A549 (cell line): ENCODE measurements at regions of chr7 and their contacts with region 1.

Region 1: DNA sequence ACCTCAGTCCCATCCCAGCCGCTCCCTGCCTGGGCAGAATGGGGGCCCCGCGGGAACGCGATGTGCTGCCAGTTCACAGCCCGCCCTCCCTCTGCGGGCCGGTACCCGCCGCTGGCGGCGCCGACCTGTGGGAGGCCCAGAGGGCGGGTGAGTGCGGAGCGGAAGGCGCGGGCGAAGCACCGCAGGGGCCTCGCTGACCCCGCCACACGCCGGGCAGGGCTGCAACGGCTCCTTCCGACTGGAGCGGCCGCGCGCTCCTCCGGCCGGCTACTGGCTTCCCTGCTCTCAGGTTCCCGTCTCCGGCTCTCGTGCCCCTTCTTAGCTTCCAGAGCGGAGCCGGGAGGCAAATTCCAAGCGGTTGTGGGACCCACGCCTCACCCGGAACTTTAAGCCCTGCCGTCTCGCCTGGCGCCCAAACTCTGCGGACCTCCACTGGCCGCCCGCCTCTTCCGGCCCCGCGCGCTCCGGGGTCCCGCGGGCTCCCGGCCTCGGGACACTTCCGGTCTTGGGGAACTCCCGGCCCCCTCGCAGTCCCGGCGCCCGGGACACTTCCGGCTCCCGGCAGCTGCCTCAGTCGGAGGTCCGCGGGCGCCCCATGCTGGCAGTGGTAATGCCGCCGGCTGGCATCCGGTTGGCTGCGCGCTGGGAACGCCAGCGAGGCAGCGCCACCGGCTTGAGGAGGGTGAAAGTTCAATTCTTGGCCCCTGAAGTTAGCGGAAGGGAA is at the start of gene CYREN:
- DNase-seq: peak; percentile 93 to 97
- ATAC-seq: peak; percentile 93 to 95
- H3K4me3 ChIP-seq: peak within 1 kb of the TSS; percentile 87
- H3K27ac ChIP-seq: peak within 1 kb of the TSS; percentile 96 to 99
- H3K4me1 ChIP-seq: peaks cover 25% of the 10 kb centered on the region
- CTCF ChIP-seq: peak; percentile 84
- EP300 ChIP-seq: no peak; a peak in 1 of 5 replicates
- POLR2A ChIP-seq: peak; percentile 46
- RAD21 ChIP-seq: peak; percentile 67 to 84
- polyA plus RNA-seq, gene CYREN: 69.1 and 70.4 TPM in 2 replicates

Region 2: DNA sequence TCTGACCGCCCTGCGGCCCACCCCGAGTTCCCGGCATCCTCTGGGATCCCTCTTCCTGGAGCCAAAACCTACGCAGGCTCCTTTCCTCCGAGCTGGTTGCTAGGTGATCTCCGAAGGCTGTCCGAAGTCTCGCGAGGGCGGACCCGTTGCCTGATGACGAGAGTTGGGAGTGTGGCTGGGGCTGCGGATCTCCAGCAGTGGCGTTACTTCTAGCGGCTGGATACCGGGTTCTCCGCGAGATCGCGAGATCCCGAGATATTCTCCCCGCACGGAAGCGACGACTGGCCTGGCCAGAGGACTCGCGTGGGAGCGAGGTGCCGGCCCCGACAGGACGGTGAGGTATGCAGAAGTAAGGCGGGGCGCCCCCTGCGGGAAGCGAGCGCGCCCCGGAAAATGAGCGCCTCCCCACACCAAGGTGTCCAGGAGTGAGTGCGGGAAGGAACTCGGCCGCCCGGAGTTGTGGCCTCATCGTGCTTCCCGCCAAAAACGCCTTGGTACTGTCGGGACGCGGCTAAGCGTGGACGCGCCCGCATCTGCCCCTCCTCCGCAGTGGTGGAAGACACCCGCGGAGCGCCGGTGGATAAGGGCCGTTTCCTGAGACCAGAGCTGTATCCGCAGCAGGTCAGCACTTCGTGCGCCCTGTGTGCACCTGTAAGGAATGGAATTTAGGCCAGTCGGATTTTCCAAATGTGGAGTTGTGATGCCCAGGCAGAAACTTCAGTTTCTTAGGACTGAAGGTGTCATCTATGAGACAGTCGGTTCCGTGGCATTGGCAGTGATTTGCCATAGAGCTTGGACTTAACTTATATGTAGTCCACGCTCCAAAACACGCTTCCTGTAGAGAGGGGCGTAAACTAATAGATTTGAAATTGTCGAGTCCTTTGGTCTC is 183.8 kb before region 1 on chr7 and contains the start of gene AGBL3:
- CTCF ChIA-PET with region 1: interaction called, 17 read pairs
- POLR2A ChIA-PET with region 1: interaction called, 8 read pairs
- DNase-seq: peak; percentile 96 to 97
- ATAC-seq: peak; percentile 99
- H3K4me3 ChIP-seq: peak within 1 kb of the TSS; percentile 82
- H3K27ac ChIP-seq: peak within 1 kb of the TSS; percentile 88 to 94
- H3K4me1 ChIP-seq: peaks cover 33% of the 10 kb centered on the region
- CTCF ChIP-seq: peak; percentile 77
- EP300 ChIP-seq: no peak
- POLR2A ChIP-seq: peak; percentile 62
- RAD21 ChIP-seq: peak; percentile 31 to 68; a peak in 4 of 5 replicates
- polyA plus RNA-seq, gene AGBL3: 4.2 and 4.3 TPM in 2 replicates

Region 3: DNA sequence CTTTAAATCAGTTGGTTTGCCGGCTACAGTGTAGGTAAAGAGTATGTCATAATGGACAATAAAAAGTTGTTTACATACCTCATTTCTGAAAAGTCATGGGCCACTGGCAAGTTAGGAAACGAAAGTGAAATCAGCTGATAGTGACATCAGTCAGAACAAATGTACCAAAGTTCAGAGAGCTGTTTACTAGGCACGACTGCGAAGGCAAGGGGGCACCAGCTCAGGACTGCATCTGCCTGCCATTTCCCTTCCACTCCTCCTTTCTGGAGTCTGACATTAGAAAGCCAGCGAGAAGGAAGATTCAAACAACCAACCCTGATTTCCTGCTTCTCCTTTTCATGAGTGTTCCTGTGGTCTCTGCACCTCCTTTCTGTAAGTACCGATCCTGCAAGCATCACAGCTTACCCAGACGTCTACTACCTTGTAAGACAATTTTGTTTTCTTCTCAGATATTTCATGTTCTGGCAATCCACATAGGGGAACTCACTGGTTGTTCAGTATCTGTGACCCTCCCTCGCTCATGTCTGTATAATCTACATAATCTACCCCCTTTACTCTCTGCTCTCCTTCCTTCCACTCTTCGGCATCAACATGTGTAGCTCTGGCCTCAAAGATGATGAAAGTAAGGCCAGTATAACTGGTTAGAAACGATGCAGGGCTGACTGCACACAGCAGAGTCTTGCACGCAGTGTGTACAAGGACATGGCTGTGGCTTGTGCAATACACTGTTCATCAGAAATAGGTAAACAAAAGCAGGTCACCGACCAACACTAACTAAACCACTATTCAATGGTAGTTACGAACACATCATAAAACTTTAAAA is 22.3 kb before region 1 on chr7 and contains the start of gene TMEM140:
- CTCF ChIA-PET with region 1: interaction called, 10 read pairs
- POLR2A ChIA-PET with region 1: interaction called, 4 read pairs
- DNase-seq: peak in 1 of 2 experiments; percentile 56
- ATAC-seq: peak; percentile 77 to 83
- H3K4me3 ChIP-seq: peak within 1 kb of the TSS; percentile 41
- H3K27ac ChIP-seq: peak within 1 kb of the TSS; percentile 61 to 72
- H3K4me1 ChIP-seq: peaks cover 16% of the 10 kb centered on the region
- CTCF ChIP-seq: no peak
- EP300 ChIP-seq: no peak
- POLR2A ChIP-seq: no peak
- RAD21 ChIP-seq: no peak
- polyA plus RNA-seq, gene TMEM140: 0.87 and 1.4 TPM in 2 replicates

Region 4: DNA sequence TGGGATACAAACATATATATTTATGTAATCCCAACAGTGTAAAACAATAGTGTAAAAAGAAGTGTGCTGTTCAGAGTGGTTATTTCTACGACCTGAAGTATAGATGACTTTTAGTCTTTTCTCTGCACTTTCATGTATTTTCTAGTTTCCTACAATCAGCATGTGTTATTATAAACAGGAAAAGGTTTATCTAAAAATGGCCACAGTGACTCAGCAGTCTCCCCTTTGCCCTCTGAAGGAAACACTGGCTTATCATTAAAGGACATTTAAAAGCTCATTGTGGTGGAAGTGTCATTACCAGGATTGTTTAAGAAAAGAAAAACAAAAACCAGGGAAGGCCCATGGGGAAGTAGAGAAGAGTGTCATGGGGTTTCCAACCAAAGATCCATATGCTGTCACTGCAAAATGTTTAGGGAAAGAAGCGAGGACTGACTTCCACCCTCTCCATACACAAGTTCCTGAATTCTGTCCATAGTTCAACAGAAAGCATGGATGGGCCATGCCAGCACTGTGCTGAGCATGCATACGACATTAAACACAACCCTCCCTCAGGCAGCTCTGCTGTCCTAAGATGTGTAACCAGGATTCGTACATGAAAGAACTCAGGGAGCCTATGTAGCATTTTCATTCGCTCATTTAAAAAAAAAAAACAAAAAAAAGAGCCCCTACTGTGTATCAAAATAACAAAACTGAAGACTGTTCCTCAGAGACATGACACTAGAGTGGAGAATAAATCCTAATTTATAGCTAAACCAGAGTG is 10.2 kb before region 1 on chr7:
- CTCF ChIA-PET with region 1: interaction called, 31 read pairs
- POLR2A ChIA-PET with region 1: interaction called, 4 read pairs
- DNase-seq: peak in 1 of 2 experiments; percentile 36
- ATAC-seq: no peak; a peak in 2 of 6 replicates
- H3K4me3 ChIP-seq: no peak overlapping the region
- H3K27ac ChIP-seq: peak overlapping the region; percentile 73 to 75
- H3K4me1 ChIP-seq: peaks cover 17% of the 10 kb centered on the region
- CTCF ChIP-seq: no peak
- EP300 ChIP-seq: no peak
- POLR2A ChIP-seq: no peak
- RAD21 ChIP-seq: no peak